ENCODE measurements at regions of chr12 and their contacts with region 1.

Region 1: GRCh38 chr12:111313833-111314259 is 55.0 kb downstream of the PHETA1 start:
- DNase-seq: peak; percentile 93
- H3K4me3 ChIP-seq: no peak overlapping the region; a peak in 1 of 4 replicates
- H3K27ac ChIP-seq: no peak overlapping the region
- H3K4me1 ChIP-seq: no peaks in the 10 kb centered on the region; a peak in 1 of 4 replicates
- H3K27me3 ChIP-seq: no peaks in the 10 kb centered on the region
- CTCF ChIP-seq: peak; percentile 92
- EP300 ChIP-seq: no peak
- RAD21 ChIP-seq: peak; percentile 92

Region 2: DNA sequence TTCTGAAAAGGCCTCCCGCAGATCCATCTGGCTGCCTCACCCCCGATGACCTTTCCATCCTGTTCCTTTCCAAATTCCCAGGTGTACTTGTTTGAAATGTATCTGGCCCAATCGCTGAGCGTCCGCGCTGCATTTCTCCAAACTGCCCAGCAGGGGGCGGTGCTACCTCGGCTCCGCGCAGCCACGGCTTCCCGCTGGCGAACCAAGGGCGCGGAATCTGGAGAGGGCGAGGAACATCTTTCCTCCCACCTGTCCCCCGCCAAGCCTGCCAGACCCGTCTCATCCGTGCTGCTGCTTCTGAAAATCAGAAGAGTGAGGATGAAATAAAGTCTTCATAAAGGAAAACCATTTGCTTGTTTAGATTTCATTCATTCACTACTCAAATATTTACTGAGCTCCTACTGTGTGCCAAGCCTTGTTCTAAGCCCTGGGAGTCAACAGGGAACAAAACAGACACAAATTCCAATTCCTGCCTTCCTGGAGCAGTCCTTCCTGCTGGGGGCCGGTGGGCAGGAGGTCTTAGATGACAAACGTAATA is 376.7 kb before region 1 on chr12:
- CTCF ChIA-PET with region 1: interaction called, 13 read pairs
- POLR2A ChIA-PET with region 1: no interaction called
- DNase-seq: peak; percentile 85
- H3K4me3 ChIP-seq: peak overlapping the region in 1 of 2 experiments; percentile 48; a peak in 1 of 4 replicates
- H3K27ac ChIP-seq: no peak overlapping the region
- H3K4me1 ChIP-seq: no peaks in the 10 kb centered on the region; a peak in 1 of 4 replicates
- H3K27me3 ChIP-seq: no peaks in the 10 kb centered on the region
- CTCF ChIP-seq: peak; percentile 93
- EP300 ChIP-seq: no peak
- RAD21 ChIP-seq: peak; percentile 89

Region 3: GRCh38 chr12:111024205-111024801 is 289.5 kb before region 1 on chr12:
- CTCF ChIA-PET with region 1: interaction called, 37 read pairs
- POLR2A ChIA-PET with region 1: no interaction called
- DNase-seq: peak; percentile 83
- H3K4me3 ChIP-seq: peak overlapping the region in 1 of 2 experiments; percentile 41; a peak in 1 of 4 replicates
- H3K27ac ChIP-seq: no peak overlapping the region
- H3K4me1 ChIP-seq: no peaks in the 10 kb centered on the region; a peak in 1 of 4 replicates
- H3K27me3 ChIP-seq: 0 out of 2 replicates have a peak, but pooled peaks cover 8% of the 10 kb centered on the region
- CTCF ChIP-seq: peak; percentile 70
- EP300 ChIP-seq: no peak
- RAD21 ChIP-seq: peak; percentile 90

Region 4: GRCh38 chr12:111138016-111138415 is 175.8 kb before region 1 on chr12:
- CTCF ChIA-PET with region 1: interaction called, 13 read pairs
- POLR2A ChIA-PET with region 1: no interaction called
- DNase-seq: peak; percentile 67
- H3K4me3 ChIP-seq: no peak overlapping the region
- H3K27ac ChIP-seq: no peak overlapping the region
- H3K4me1 ChIP-seq: peaks cover 0 to 8% of the 10 kb centered on the region in 2 experiments; a peak in 1 of 4 replicates
- H3K27me3 ChIP-seq: no peaks in the 10 kb centered on the region
- CTCF ChIP-seq: 0 out of 2 replicates have a peak, but pooled peaks have one; percentile 8
- EP300 ChIP-seq: no peak
- RAD21 ChIP-seq: peak; percentile 77

Region 5: GRCh38 chr12:111451649-111452129 is 137.8 kb after region 1 on chr12:
- CTCF ChIA-PET with region 1: no interaction called
- POLR2A ChIA-PET with region 1: no interaction called
- DNase-seq: peak; percentile 62
- H3K4me3 ChIP-seq: peak overlapping the region in 1 of 2 experiments; percentile 18; a peak in 1 of 4 replicates
- H3K27ac ChIP-seq: peak overlapping the region in 1 of 2 experiments; percentile 38; a peak in 1 of 4 replicates
- H3K4me1 ChIP-seq: peaks cover 6 to 51% of the 10 kb centered on the region in 2 experiments
- H3K27me3 ChIP-seq: no peaks in the 10 kb centered on the region
- CTCF ChIP-seq: peak; percentile 91
- EP300 ChIP-seq: no peak
- RAD21 ChIP-seq: peak; percentile 87

Region 6: GRCh38 chr12:111616177-111616623 is 302.4 kb after region 1 on chr12:
- CTCF ChIA-PET with region 1: no interaction called
- POLR2A ChIA-PET with region 1: no interaction called
- DNase-seq: no peak
- H3K4me3 ChIP-seq: no peak overlapping the region
- H3K27ac ChIP-seq: no peak overlapping the region
- H3K4me1 ChIP-seq: no peaks in the 10 kb centered on the region
- H3K27me3 ChIP-seq: no peaks in the 10 kb centered on the region
- CTCF ChIP-seq: no peak
- EP300 ChIP-seq: no peak
- RAD21 ChIP-seq: no peak

Measured in SK-N-SH (cell line).